ENCODE measurements at regions of chr14 and their contacts with region 1.

Region 1: DNA sequence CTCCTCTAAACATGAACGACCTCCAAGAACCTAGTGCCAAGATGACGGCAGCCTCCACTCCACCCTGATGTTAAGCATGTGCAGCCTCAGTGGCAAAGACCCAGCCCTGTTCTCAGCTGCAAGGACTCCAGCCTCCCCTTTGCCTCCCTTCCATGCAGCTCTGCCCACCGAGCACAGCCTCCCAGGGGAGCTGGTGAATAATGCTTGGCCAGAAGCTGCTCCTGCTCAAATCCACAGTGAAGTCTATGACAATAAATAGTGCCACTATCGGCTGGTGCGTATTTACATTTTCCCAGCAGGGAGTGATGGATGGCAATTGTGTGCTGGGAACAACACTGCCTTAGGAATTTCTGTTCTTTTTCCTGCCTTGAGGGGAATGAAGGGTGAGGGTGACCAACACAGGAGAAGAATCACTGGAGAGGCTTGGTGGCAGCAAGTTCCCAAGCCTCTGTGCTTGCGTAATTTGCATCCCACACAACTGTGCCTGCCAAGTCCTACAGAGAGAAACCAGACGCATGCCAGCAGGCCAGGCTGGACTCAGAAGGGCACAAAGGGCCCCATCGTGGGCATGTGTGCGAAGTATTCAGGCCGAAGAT is 29.9 kb upstream of the TC2N start:
- DNase-seq: peak in 1 of 2 donors; percentile 48
- ATAC-seq: peak in 1 of 2 donors; percentile 29
- H3K4me3 ChIP-seq: no peak overlapping the region
- H3K27ac ChIP-seq: peak overlapping the region; percentile 25 to 48 (median 34)
- H3K4me1 ChIP-seq: peaks cover 0 to 4% of the 10 kb centered on the region in 2 donors
- H3K27me3 ChIP-seq: peaks cover 0 to 6% (median 0%) of the 10 kb centered on the region in 3 donors
- CTCF ChIP-seq: no peak
- POLR2A ChIP-seq: no peak

Region 2: DNA sequence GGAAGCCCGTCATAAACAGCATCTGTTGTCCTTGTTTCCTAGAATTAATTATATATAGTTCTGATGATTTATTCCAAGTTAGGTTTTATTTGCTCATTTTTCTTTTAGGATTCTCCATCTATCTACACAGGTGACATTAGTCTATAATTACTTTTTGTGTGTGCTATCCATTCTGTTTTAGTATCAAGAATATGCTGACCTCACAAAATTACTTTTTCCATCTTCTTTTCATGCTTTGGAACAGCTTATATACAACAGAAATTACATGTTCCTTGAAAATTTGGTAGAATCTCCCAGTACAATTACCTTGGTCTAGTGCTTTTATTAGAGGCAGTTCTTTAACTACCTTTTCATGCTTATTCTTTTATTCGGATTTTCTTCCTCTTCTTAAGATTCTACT is 111.0 kb before region 1 on chr14:
- in situ Hi-C with region 1: no loop called
- intact Hi-C with region 1: loop called (anchors 5 kb)
- DNase-seq: no peak
- ATAC-seq: no peak
- H3K4me3 ChIP-seq: no peak overlapping the region
- H3K27ac ChIP-seq: no peak overlapping the region
- H3K4me1 ChIP-seq: no peaks in the 10 kb centered on the region
- H3K27me3 ChIP-seq: no peaks in the 10 kb centered on the region
- CTCF ChIP-seq: no peak
- POLR2A ChIP-seq: no peak

Measured in gastrocnemius medialis (tissue), 4 donors.